AG04449 (cell line): ENCODE measurements at regions of chr3 and their contacts with region 1.

Region 1: DNA sequence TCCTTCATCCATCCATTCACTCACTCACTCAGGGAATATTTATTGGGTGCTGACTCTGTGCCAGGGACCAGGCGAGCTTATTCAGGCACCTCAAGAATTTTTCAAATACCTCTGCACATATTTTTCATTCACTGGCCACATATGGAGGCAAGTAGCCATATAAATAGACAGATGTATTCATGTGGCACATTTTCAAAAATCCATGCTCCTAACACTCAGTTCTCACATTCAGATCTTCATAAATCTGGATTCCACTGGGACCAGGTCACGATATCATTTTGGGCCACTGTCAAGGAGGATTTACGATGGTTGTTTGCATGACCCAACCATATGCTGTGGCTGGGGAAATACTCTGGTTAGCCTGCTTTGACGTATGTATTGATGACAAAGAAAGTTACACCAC is 241.8 kb upstream of the LRTM1 start:
- DNase-seq: peak; percentile 100
- H3K4me3 ChIP-seq: no peak overlapping the region
- CTCF ChIP-seq: no peak

Region 2: GRCh38 chr3:54870423-54870822 is 299.2 kb before region 1 on chr3:
- CTCF ChIA-PET with region 1: interaction called, 12 read pairs
- POLR2A ChIA-PET with region 1: interaction called, 4 read pairs
- DNase-seq: peak; percentile 96
- H3K4me3 ChIP-seq: no peak overlapping the region
- CTCF ChIP-seq: peak; percentile 67

Region 3: GRCh38 chr3:55180936-55181535 is 11.4 kb after region 1 on chr3:
- CTCF ChIA-PET with region 1: interaction called, 42 read pairs
- POLR2A ChIA-PET with region 1: interaction called, 3 read pairs
- DNase-seq: no peak
- H3K4me3 ChIP-seq: no peak overlapping the region
- CTCF ChIP-seq: peak; percentile 48

Region 4: GRCh38 chr3:55198543-55198942 is 28.9 kb after region 1 on chr3:
- CTCF ChIA-PET with region 1: interaction called, 3 read pairs
- POLR2A ChIA-PET with region 1: interaction called, 12 read pairs
- DNase-seq: peak; percentile 95
- H3K4me3 ChIP-seq: no peak overlapping the region
- CTCF ChIP-seq: no peak

Region 5: GRCh38 chr3:55267206-55267930 is 97.8 kb after region 1 on chr3:
- CTCF ChIA-PET with region 1: no interaction called
- POLR2A ChIA-PET with region 1: no interaction called
- DNase-seq: peak; percentile 34
- H3K4me3 ChIP-seq: no peak overlapping the region
- CTCF ChIP-seq: no peak

Region 6: GRCh38 chr3:55364456-55364855 is 194.8 kb after region 1 on chr3:
- CTCF ChIA-PET with region 1: interaction called, 3 read pairs
- POLR2A ChIA-PET with region 1: interaction called, 18 read pairs
- DNase-seq: peak; percentile 95
- H3K4me3 ChIP-seq: no peak overlapping the region
- CTCF ChIP-seq: no peak

Region 7: GRCh38 chr3:55476515-55476914 is 306.9 kb after region 1 on chr3:
- CTCF ChIA-PET with region 1: interaction called, 4 read pairs
- POLR2A ChIA-PET with region 1: interaction called, 22 read pairs
- DNase-seq: no peak
- H3K4me3 ChIP-seq: peak overlapping the region; percentile 98
- CTCF ChIP-seq: no peak

Region 8: DNA sequence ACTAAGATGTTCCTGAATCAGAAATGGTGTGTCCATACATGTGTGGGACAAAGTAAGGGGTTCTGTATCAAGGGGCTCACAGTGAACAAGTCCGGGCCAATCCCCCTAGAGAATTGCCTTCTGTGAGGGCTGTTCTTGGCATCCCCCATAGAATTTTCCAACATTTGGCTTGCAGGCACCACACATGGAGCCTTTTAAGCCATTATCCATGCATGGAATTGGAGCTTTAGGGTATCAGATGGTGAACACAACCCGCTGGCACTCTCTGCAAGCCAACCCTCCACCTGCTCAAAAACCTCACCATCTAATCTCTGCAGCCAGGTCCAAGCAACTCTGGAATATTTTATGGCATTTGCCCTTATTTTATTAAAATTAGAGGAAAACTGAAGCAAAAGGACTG is 1019.9 kb after region 1 on chr3:
- CTCF ChIA-PET with region 1: no interaction called
- POLR2A ChIA-PET with region 1: no interaction called
- DNase-seq: no peak
- H3K4me3 ChIP-seq: no peak overlapping the region
- CTCF ChIP-seq: no peak